ENCODE measurements at regions of chr22 and their contacts with region 1.

Region 1: DNA sequence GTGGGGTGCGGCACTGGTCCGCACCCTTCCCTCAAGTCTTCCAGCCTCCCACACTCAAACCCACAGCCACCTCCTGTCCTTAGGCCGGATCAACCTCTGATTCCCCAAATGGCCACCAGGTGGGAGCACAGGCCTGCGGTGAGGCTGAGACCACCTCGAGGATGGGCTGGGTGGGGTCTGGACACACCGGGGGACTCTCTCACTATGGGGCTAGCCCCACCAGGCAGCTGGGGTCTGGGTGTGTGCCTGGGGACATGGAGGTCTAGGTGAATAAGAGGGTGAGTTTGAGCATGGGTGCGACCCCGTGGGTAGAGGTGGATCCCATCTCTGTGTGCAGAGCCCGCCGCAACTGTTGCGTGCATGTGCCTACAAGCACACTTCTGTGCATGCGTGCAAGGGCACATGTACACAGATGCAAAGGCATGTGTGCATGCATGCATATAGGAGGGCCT is 32.6 kb downstream of the MYO18B start:
- DNase-seq: no peak
- ATAC-seq: no peak
- H3K4me3 Mint-ChIP-seq: no peak overlapping the region
- H3K27ac Mint-ChIP-seq: no peak overlapping the region
- H3K4me1 Mint-ChIP-seq: peaks cover 27% of the 10 kb centered on the region
- H3K27me3 Mint-ChIP-seq: peaks cover 6% of the 10 kb centered on the region

Region 2: GRCh38 chr22:25465949-25466348 is 308.7 kb before region 1 on chr22:
- CTCF ChIA-PET with region 1: interaction called, 45 read pairs
- POLR2A ChIA-PET with region 1: no interaction called
- DNase-seq: no peak
- ATAC-seq: no peak
- H3K4me3 Mint-ChIP-seq: no peak overlapping the region
- H3K27ac Mint-ChIP-seq: peak overlapping the region; percentile 15
- H3K4me1 Mint-ChIP-seq: peaks cover 13% of the 10 kb centered on the region
- H3K27me3 Mint-ChIP-seq: no peaks in the 10 kb centered on the region

Region 3: GRCh38 chr22:25564320-25564978 is 210.2 kb before region 1 on chr22 and contains the start of gene GRK3:
- CTCF ChIA-PET with region 1: interaction called, 43 read pairs
- POLR2A ChIA-PET with region 1: no interaction called
- DNase-seq: peak; percentile 87
- ATAC-seq: peak; percentile 87
- H3K4me3 Mint-ChIP-seq: peak within 1 kb of the TSS; percentile 98
- H3K27ac Mint-ChIP-seq: peak within 1 kb of the TSS; percentile 95
- H3K4me1 Mint-ChIP-seq: peaks cover 51% of the 10 kb centered on the region
- H3K27me3 Mint-ChIP-seq: no peaks in the 10 kb centered on the region
- total RNA-seq, gene GRK3: 35.0 to 36.6 TPM

Region 4: DNA sequence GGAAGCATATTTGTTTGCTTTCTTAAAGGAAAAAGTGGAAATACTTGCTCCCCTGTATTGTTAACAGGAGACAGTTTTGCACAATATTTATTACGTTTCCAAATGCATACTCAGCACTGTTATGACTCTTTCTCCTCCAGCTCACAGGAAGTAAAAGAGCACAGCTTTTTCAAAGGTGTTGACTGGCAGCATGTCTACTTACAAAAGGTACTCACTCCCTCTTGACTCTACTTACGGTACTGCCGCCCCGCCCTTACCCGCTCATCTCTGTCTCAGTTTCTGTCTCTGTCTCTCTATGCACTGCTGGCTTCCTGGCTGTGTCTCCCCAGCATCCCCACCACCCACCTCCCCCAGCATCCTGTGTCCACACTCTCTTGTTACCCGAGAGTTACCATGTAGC is 64.8 kb before region 1 on chr22:
- CTCF ChIA-PET with region 1: interaction called, 71 read pairs
- POLR2A ChIA-PET with region 1: no interaction called
- DNase-seq: peak; percentile 62
- ATAC-seq: peak; percentile 80
- H3K4me3 Mint-ChIP-seq: no peak overlapping the region
- H3K27ac Mint-ChIP-seq: peak overlapping the region; percentile 80
- H3K4me1 Mint-ChIP-seq: peaks cover 38% of the 10 kb centered on the region
- H3K27me3 Mint-ChIP-seq: no peaks in the 10 kb centered on the region

Region 5: GRCh38 chr22:25754527-25755202 is 19.9 kb before region 1 on chr22:
- CTCF ChIA-PET with region 1: interaction called, 22 read pairs
- POLR2A ChIA-PET with region 1: no interaction called
- DNase-seq: no peak
- ATAC-seq: no peak
- H3K4me3 Mint-ChIP-seq: no peak overlapping the region
- H3K27ac Mint-ChIP-seq: no peak overlapping the region
- H3K4me1 Mint-ChIP-seq: peaks cover 43% of the 10 kb centered on the region
- H3K27me3 Mint-ChIP-seq: no peaks in the 10 kb centered on the region

Measured in activated CD8-positive, alpha-beta T cell treated with anti-CD3 and anti-CD28 coated beads, Interleukin-2, amount 10 ng/mL, durations not matched to agents 7 days and 5 days (primary cell).